ENCODE measurements at regions of chr12 and their contacts with region 1.

Region 1: GRCh38 chr12:77010691-77011548 is 54.4 kb downstream of the E2F7 start:
- DNase-seq: peak; percentile 32 to 71 (median 52)
- ATAC-seq: peak; percentile 72
- H3K4me3 ChIP-seq: no peak overlapping the region
- H3K4me3 Mint-ChIP-seq: no peak overlapping the region
- H3K27ac ChIP-seq: no peak overlapping the region
- H3K27ac Mint-ChIP-seq: no peak overlapping the region
- H3K4me1 ChIP-seq: no peaks in the 10 kb centered on the region
- H3K4me1 Mint-ChIP-seq: peaks cover 6% of the 10 kb centered on the region
- H3K27me3 ChIP-seq: peaks cover 0 to 5% of the 10 kb centered on the region in 2 experiments
- H3K27me3 Mint-ChIP-seq: peaks cover 23% of the 10 kb centered on the region
- CTCF ChIP-seq: peak; percentile 93

Region 2: GRCh38 chr12:76621582-76622024 is 389.3 kb before region 1 on chr12:
- CTCF ChIA-PET with region 1: interaction called, 4 read pairs
- POLR2A ChIA-PET with region 1: interaction called, 3 read pairs
- intact Hi-C with region 1: loop called (anchors 1 kb)
- DNase-seq: peak; percentile 50 to 84 (median 64)
- ATAC-seq: peak; percentile 97
- H3K4me3 ChIP-seq: no peak overlapping the region
- H3K4me3 Mint-ChIP-seq: no peak overlapping the region
- H3K27ac ChIP-seq: no peak overlapping the region
- H3K27ac Mint-ChIP-seq: no peak overlapping the region
- H3K4me1 ChIP-seq: no peaks in the 10 kb centered on the region
- H3K4me1 Mint-ChIP-seq: peaks cover 6% of the 10 kb centered on the region
- H3K27me3 ChIP-seq: no peaks in the 10 kb centered on the region
- H3K27me3 Mint-ChIP-seq: no peaks in the 10 kb centered on the region
- CTCF ChIP-seq: peak; percentile 97

Region 3: DNA sequence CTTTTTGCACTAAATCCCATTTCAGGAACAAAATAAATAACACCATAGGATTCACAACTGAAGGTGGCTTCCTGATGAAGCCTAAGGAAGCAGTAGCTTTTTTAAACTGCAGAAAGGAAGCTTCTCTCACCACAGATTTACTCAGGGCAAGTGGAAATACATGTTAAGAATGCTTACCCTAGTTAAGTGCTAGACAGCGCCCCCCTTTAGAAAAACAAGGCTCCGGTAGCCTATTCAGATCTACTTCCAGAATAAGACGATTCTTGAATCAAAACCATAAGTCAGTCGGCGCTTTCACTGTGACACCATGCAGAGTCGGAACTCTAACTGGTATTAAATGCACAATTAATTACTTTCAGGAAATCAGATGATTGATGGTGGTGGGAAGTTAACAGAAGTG is 12.6 kb after region 1 on chr12:
- CTCF ChIA-PET with region 1: interaction called, 7 read pairs
- POLR2A ChIA-PET with region 1: interaction called, 10 read pairs
- intact Hi-C with region 1: no loop called
- DNase-seq: no peak
- ATAC-seq: no peak
- H3K4me3 ChIP-seq: no peak overlapping the region
- H3K4me3 Mint-ChIP-seq: no peak overlapping the region
- H3K27ac ChIP-seq: no peak overlapping the region
- H3K27ac Mint-ChIP-seq: no peak overlapping the region
- H3K4me1 ChIP-seq: no peaks in the 10 kb centered on the region
- H3K4me1 Mint-ChIP-seq: no peaks in the 10 kb centered on the region
- H3K27me3 ChIP-seq: no peaks in the 10 kb centered on the region
- H3K27me3 Mint-ChIP-seq: no peaks in the 10 kb centered on the region
- CTCF ChIP-seq: no peak